K562 (cell line): ENCODE measurements at regions of chr14 and their contacts with region 1.

Region 1: DNA sequence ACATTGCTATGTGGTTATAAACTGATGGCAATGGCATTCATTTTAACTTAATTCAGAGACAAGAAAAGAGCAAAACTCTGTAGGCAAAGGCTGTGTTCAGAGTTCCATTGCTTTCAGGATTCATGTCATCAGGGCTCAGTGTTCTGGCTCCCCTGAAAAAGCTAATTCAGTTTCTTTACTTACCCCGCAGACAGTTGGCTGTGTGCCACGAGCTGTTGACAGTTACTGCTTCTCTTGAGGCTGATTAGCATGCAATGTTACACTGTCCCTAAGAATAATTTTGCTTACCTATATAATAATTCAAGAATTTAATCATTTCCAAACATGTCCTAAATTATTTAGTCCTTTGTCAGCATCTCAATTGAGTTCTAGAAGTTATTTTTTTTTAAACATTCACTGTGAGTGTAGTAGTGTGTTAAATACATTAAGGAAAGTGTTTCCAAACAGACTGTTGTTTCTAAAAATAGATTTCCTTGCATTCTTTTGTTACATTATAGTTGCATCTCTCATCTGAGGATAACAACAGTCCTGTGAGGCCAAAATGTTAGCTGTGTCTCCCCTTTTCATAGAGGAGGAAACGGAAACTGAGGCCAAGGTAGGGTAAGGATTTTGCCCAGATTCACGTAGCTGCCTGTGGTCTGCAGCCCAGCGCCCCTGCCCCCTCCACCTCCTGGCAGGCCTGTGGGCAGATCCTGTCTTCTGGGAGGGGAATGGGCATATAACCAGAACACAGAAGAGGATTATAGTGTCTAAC is 98.6 kb downstream of the PELI2 start:
- DNase-seq: peak; percentile 24 to 71 (median 44)
- ATAC-seq: peak; percentile 36
- H3K4me3 ChIP-seq: no peak overlapping the region
- H3K27ac ChIP-seq: peak overlapping the region; percentile 50; the same call in 2 of the 3 replicates
- H3K4me1 ChIP-seq: peaks cover 11 to 42% of the 10 kb centered on the region in 2 experiments; a peak in 4 of 5 replicates
- H3K27me3 ChIP-seq: no peaks in the 10 kb centered on the region
- CTCF ChIP-seq: no peak
- EP300 ChIP-seq: no peak
- POLR2A ChIP-seq: peak; percentile 91
- RAD21 ChIP-seq: no peak

Region 2: DNA sequence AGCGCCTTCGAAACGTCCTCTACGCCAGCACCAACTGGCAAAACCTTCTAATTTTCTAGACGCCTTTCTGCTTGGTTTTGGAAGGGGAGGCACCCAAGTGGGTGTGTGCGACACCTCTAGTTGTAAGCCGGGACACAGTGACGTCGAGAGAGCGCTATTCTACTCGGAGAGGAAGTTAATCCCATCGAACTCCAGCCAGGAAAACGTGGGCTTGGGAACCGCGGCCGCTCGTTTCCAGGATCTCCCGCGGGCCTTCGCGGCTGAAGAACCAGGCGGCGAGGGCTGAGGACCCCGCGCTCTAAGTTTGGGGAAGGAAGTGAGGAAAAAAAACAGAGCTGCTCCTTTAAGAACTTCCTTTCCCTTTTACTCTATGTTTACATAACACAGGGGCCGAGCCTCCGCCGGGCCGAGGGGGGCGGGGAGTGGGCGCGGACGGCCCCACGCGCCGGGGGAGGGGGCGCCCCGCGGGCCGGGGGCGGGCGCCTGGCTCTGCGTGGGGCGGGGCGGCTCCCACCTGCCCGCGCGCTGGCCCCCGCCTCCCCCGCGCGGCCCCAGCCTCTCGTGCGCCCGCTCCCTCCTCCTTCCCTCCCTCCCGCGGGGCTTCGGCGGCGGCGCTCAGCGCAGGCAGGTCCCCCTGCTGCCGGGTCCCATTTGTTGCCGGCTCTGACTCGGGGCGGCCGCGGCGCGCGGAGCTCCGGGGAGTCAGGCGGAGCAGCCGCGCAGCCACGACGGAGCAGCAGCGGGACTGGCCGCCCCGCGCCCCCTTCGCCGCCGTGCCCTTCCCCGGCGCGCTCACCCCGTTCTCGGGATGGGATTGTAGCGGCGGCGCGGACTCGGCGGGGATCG is 98.8 kb before region 1 on chr14 and contains the start of gene PELI2:
- CTCF ChIA-PET with region 1: no interaction called
- POLR2A ChIA-PET with region 1: no interaction called
- in situ Hi-C with region 1: no loop called
- intact Hi-C with region 1: loop called (anchors 10 kb)
- DNase-seq: peak; percentile 54 to 73 (median 61)
- ATAC-seq: peak; percentile 92
- H3K4me3 ChIP-seq: peak within 1 kb of the TSS; percentile 48
- H3K27ac ChIP-seq: no peak within 1 kb of the TSS
- H3K4me1 ChIP-seq: peaks cover 0 to 19% of the 10 kb centered on the region in 2 experiments; a peak in 2 of 5 replicates
- H3K27me3 ChIP-seq: peaks cover 5 to 13% of the 10 kb centered on the region in 2 experiments
- CTCF ChIP-seq: 0 out of 6 replicates have a peak, but pooled peaks of 1 of the 3 experiments have one; percentile 28
- EP300 ChIP-seq: no peak
- POLR2A ChIP-seq: no peak
- RAD21 ChIP-seq: no peak
- polyA plus RNA-seq, gene PELI2: 0.20 to 0.63 TPM

Region 3: GRCh38 chr14:56176530-56176929 is 40.3 kb before region 1 on chr14:
- CTCF ChIA-PET with region 1: no interaction called
- POLR2A ChIA-PET with region 1: no interaction called
- in situ Hi-C with region 1: no loop called
- intact Hi-C with region 1: no loop called
- DNase-seq: no peak
- ATAC-seq: no peak
- H3K4me3 ChIP-seq: no peak overlapping the region
- H3K27ac ChIP-seq: no peak overlapping the region
- H3K4me1 ChIP-seq: peaks cover 0 to 16% of the 10 kb centered on the region in 2 experiments; a peak in 4 of 5 replicates
- H3K27me3 ChIP-seq: no peaks in the 10 kb centered on the region
- CTCF ChIP-seq: no peak
- EP300 ChIP-seq: no peak
- POLR2A ChIP-seq: no peak
- RAD21 ChIP-seq: no peak

Region 4: DNA sequence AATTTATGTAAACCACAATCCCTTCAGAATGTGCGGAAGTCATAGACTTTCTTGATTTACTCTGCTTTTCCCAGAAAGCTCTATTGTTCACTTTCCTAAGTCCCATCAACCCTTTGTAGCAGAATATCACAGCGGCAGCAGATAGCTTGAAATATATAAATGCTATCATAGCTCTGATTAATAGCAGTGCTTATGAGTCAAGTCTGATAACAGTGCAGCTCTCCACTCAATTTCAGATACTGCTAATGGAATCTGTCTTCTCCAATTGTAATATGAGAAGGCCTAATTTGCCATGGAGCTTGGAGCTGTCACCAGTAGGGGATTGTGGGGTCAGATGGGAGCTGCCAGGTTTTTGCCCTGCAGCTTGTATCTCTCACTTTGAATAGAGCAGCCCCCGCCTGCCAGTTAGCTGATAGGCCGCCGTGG is 373.7 kb after region 1 on chr14:
- CTCF ChIA-PET with region 1: no interaction called
- POLR2A ChIA-PET with region 1: no interaction called
- in situ Hi-C with region 1: no loop called
- intact Hi-C with region 1: no loop called
- DNase-seq: no peak
- ATAC-seq: no peak
- H3K4me3 ChIP-seq: no peak overlapping the region
- H3K27ac ChIP-seq: no peak overlapping the region
- H3K4me1 ChIP-seq: no peaks in the 10 kb centered on the region
- H3K27me3 ChIP-seq: no peaks in the 10 kb centered on the region
- CTCF ChIP-seq: no peak
- EP300 ChIP-seq: no peak
- POLR2A ChIP-seq: no peak
- RAD21 ChIP-seq: no peak